ENCODE measurements at regions of chr22 and their contacts with region 1.

Region 1: DNA sequence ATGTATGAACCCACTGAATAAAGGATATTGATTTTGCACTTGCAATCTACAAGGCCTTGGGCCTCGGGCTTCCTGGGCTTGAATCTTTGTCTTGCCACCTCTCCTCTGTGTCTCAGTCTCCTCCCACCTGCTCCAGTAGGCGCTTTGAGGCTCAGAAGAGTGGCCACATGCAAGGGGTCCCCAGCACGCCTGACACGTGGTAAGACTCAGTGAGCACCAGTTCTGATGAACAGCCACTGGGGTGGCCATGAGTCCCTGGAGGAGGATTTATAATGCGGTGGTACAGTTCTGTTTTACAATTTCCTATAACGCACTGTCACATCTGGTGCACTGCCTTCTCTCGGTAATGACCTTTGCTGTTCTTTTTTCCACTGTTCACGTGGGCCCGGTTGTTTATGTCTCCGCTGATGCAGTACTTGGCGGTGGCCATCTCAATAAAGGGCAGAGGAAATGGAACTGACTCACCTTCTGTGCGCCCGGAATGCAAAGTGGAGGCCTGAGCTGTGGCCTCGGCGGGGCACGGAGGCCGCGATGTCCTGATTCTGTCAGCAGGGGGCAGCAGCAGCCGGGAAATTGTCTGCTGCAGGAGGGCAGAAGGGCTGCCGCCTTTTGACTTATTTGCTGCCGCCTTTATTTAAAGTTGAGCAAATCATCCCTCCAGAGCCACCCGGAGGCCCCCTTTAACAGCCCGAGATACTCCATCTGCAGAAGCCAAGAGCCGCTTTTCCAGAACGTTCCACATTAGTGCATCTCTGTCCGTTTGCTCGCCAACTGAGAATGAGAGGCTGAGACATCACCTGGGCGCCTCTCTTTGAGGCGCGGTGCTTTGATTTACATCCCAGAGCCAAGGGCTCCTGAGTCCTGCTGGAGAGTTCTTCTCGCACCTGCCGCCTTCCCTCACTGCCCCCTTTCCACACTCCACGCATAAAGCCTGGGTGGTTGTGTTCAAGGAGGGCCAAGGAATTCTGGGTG is 6.0 kb upstream of the IFT27 start:
- DNase-seq: peak; percentile 66 to 92 (median 80)
- ATAC-seq: peak; percentile 98
- H3K4me3 ChIP-seq: no peak overlapping the region
- H3K4me3 Mint-ChIP-seq: peak overlapping the region in 4 of 10 donors; percentile 8 to 57 (median 43)
- H3K27ac ChIP-seq: no peak overlapping the region
- H3K27ac Mint-ChIP-seq: peak overlapping the region in 5 of 9 donors; percentile 27 to 72 (median 58)
- H3K4me1 ChIP-seq: peaks cover 4 to 10% of the 10 kb centered on the region in 2 donors
- H3K4me1 Mint-ChIP-seq: peaks cover 9 to 34% (median 18%) of the 10 kb centered on the region in 7 donors
- H3K27me3 ChIP-seq: no peaks in the 10 kb centered on the region
- H3K27me3 Mint-ChIP-seq: peaks cover 0 to 11% (median 7%) of the 10 kb centered on the region in 5 donors

Region 2: DNA sequence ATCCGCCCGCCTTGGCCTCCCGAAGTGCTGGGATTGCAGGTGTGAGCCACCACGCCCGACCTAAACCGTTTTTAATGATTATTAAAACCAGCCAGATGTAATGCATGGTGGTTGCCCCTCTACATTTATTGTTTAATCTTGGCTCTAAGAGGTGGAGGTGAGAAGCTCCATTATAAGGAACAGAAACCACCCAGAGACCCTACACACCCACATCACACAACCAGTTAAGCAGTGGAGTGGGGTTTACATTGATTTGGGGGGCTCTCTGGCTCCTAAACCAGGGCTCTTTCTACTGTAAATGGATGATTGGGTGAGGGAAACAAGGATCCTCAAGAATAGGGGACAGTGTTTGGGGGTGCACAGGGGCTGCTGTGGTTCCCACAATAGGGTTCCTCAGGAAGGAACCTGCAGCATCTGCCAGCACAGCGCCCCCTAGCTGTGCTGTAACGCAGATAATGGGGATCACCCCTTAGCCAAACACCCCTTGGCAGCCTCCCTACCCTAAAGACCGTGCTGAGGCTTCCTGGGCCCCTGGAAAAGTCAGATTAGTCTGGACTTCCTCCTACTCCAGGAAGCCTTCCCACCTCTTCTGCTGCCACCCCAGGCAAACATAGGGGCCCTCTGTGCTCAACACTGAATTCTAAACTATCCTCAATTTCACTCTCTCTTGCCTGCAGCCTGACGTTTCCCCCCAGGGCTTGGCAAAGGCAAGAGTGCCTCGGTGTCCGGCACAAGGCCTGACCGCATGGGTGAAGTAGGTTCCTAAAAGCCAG is 240.0 kb after region 1 on chr22:
- CTCF ChIA-PET with region 1: no interaction called
- POLR2A ChIA-PET with region 1: no interaction called
- intact Hi-C with region 1: loop called in 1 of 2 experiments (anchors 1 kb)
- DNase-seq: peak in 8 of 9 donors; percentile 22 to 61 (median 36)
- ATAC-seq: peak; percentile 65
- H3K4me3 ChIP-seq: no peak overlapping the region
- H3K4me3 Mint-ChIP-seq: peak overlapping the region in 6 of 10 donors; percentile 16 to 77 (median 64)
- H3K27ac ChIP-seq: no peak overlapping the region
- H3K27ac Mint-ChIP-seq: peak overlapping the region in 1 of 9 donors; percentile 49
- H3K4me1 ChIP-seq: peaks cover 0 to 4% of the 10 kb centered on the region in 2 donors
- H3K4me1 Mint-ChIP-seq: peaks cover 4 to 18% (median 7%) of the 10 kb centered on the region in 7 donors
- H3K27me3 ChIP-seq: peaks cover 0 to 8% of the 10 kb centered on the region in 2 donors
- H3K27me3 Mint-ChIP-seq: peaks cover 0 to 10% (median 0%) of the 10 kb centered on the region in 5 donors

Region 3: DNA sequence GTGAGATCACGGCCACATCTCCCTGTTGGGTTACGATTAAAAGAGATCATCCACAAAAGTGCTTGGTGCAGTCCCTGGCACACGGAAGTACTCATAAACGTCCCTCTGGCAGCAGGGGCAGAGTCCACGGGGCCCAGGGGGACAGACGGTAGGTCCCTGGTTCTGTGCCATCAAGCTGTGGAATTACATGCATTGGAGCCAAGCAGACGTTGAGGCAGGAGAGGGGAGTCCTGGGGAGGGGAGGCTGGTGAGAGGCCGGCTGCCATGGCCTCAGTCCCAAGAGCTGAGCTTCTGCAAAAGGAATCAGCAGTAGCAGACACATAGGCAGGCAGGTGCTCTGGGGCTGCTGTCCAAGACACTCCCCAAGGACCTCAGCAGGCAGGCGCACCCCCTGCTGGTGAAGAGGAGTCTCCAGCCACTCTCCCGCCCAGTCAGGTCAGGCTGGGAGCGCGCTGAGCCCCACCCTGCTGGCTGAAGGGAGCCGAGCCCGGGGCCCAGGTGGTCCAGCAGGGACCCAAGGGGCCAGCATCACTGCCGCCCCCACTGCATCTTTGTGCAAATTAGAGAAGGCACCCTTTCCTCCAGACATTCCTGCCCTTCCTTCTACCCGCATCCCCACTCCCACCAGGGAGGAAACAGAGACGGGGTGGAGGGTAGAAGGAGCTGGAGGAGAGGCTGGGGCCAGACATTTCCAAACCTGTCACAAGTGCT is 262.0 kb after region 1 on chr22:
- CTCF ChIA-PET with region 1: interaction called, 3 read pairs
- POLR2A ChIA-PET with region 1: no interaction called
- intact Hi-C with region 1: loop called in 1 of 2 experiments (anchors 1 kb)
- DNase-seq: peak in 2 of 9 donors; percentile 16 to 64
- ATAC-seq: peak; percentile 74
- H3K4me3 ChIP-seq: no peak overlapping the region
- H3K4me3 Mint-ChIP-seq: no peak overlapping the region
- H3K27ac ChIP-seq: no peak overlapping the region
- H3K27ac Mint-ChIP-seq: no peak overlapping the region
- H3K4me1 ChIP-seq: no peaks in the 10 kb centered on the region
- H3K4me1 Mint-ChIP-seq: peaks cover 0 to 25% (median 0%) of the 10 kb centered on the region in 7 donors
- H3K27me3 ChIP-seq: no peaks in the 10 kb centered on the region
- H3K27me3 Mint-ChIP-seq: peaks cover 0 to 9% (median 0%) of the 10 kb centered on the region in 5 donors

Measured in naive thymus-derived CD4-positive, alpha-beta T cell (primary cell).